Panc1 (cell line): ENCODE measurements at regions of chr5 and their contacts with region 1.

Region 1: DNA sequence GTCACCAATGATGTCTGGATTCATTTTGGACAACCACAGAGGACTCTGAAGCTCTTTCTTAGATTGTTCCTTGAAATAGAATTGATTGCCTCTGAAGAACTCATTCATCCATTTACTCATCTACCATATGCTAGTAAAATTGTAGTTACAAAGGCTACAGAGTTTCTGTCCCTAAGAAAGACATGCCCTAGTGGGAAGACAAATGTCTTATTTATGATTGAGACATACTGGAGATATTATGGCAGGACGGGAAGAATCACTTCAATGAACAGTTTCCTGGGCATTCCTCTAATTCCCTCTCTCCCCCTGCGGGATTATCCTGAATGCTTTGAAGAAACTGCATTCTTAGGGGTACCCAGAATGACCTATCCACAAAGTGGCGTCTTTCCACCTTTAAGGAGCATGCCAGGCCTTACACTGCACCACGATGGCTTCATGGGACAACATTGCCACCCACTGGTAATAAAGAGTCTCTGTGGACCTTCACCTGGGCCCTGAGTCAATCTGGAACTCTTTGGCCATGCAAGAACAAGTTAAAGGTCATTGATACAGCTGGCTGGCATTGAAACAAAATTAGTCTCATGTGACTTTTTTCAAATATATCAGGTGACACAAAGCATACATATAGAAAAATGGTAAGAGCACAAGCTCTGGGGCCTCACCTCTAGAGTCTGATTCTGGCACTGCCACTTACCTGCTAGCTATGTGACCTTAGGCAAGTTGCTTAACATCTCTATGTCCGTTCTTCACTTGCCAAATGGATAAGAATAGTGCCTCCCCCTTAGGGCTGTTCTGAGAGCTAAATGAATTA is 32.1 kb downstream of the ANKRD55 start:
- DNase-seq: peak; percentile 79
- ATAC-seq: peak; percentile 100
- H3K4me3 ChIP-seq: no peak overlapping the region
- H3K27ac ChIP-seq: no peak overlapping the region
- H3K4me1 ChIP-seq: no peaks in the 10 kb centered on the region
- H3K27me3 ChIP-seq: no peaks in the 10 kb centered on the region
- CTCF ChIP-seq: peak; percentile 87

Region 2: GRCh38 chr5:55699041-55699688 is 501.9 kb before region 1 on chr5:
- CTCF ChIA-PET with region 1: interaction called, 12 read pairs
- POLR2A ChIA-PET with region 1: no interaction called
- in situ Hi-C with region 1: no loop called
- intact Hi-C with region 1: no loop called
- DNase-seq: no peak
- ATAC-seq: no peak
- H3K4me3 ChIP-seq: no peak overlapping the region
- H3K27ac ChIP-seq: no peak overlapping the region
- H3K4me1 ChIP-seq: no peaks in the 10 kb centered on the region
- H3K27me3 ChIP-seq: no peaks in the 10 kb centered on the region
- CTCF ChIP-seq: no peak

Region 3: DNA sequence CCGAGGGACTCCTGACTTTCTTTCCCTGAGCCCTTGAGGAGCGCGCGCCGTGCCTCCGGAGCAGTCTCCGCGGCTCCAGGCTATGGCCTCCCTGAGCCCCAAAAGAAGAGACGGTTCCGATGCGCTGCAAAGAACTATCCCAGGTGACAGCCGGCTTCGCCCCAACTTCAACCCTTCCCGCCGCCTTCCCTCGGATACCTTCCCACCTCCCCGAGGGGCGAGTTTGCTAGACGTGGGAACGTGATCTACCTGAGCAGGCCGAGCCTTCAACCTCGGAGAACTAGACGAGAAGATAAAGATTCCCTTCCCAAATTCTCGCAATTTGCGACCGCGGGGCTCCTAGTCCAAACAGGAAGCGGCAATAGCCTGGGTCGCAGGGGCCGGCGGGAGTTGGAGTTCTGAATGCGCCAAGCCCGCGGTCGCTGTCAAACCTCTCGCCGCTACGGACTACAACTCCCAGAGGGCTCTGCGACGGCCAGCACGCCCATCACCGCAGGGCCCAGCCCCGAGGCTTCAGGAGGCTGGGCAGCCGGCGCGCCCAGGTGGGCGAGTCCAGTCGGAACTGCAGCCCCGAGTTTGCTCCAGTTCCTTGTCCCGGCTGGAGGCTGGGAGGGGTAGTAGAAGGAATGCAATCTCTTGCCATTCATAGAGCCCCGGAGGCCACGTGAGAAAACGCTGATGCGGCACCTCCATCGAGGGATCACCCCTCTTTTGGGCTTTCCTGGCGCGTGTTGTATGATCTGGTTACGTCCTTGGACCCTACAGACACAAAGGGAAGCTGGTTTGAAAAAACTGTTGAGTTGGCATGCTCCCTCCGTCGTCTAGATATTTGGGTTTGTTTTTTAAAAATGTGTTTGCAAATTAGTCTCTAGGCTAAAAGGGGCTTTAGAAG is 488.8 kb before region 1 on chr5 and contains the start of gene SLC38A9:
- CTCF ChIA-PET with region 1: no interaction called
- POLR2A ChIA-PET with region 1: no interaction called
- in situ Hi-C with region 1: no loop called
- intact Hi-C with region 1: loop called (anchors 10 kb)
- DNase-seq: peak; percentile 73
- ATAC-seq: peak; percentile 100
- H3K4me3 ChIP-seq: peak within 1 kb of the TSS; percentile 94 to 95
- H3K27ac ChIP-seq: peak within 1 kb of the TSS; percentile 80
- H3K4me1 ChIP-seq: no peaks in the 10 kb centered on the region
- H3K27me3 ChIP-seq: no peaks in the 10 kb centered on the region
- CTCF ChIP-seq: no peak
- total RNA-seq, gene SLC38A9: 12.8 TPM

Region 4: DNA sequence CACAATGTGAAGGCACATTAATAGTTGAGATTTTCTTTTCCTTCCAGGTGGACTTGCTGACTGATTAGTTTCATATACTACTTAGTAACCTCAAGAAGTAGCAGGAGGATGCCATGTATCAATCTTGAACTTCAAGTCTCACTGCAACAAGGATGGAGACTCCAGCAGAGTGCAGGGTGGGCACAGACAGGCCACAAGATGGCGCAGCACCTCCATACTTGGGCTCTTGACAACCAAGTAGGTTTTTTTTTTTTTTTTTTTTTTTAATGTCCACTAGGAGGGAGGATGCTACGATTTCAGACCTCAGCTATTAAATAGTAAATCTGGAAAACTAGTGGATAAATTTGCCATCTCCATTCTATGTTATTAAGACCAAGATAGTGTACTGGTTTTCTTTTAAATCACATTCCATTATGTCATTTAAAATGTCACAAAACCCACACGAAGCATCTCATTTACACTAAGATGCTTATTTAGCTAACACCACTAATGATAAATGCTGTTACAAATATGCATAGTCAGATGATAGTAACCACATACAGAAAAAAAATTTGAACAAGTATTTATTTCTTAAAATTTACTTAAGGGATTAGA is 264.9 kb before region 1 on chr5:
- CTCF ChIA-PET with region 1: interaction called, 8 read pairs
- POLR2A ChIA-PET with region 1: no interaction called
- in situ Hi-C with region 1: no loop called
- intact Hi-C with region 1: loop called (anchors 1 kb)
- DNase-seq: peak; percentile 76
- ATAC-seq: peak; percentile 91
- H3K4me3 ChIP-seq: no peak overlapping the region
- H3K27ac ChIP-seq: no peak overlapping the region
- H3K4me1 ChIP-seq: no peaks in the 10 kb centered on the region
- H3K27me3 ChIP-seq: no peaks in the 10 kb centered on the region
- CTCF ChIP-seq: peak; percentile 94

Region 5: DNA sequence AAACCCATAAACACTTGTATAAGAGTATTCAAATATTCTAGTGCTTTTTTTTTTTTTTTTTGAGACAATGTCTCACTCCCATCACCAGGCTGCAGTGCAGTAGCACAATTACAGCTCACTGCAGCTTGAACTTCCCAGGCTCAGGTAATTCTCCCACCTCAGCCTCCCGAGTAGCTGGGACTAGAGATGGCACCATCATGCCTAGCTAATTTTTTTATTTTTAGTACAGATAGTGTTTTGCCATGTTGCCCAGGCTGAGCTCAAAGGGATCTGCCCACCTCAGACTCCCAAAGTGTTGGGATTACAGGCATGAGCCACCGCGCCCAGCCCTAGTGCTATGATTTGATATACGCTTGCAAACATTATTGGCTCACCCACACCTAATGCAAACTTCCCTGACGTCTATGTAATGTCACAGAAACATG is 218.1 kb before region 1 on chr5:
- CTCF ChIA-PET with region 1: interaction called, 17 read pairs
- POLR2A ChIA-PET with region 1: no interaction called
- in situ Hi-C with region 1: no loop called
- intact Hi-C with region 1: no loop called
- DNase-seq: no peak
- ATAC-seq: peak; percentile 68; the same call in 1 of the 2 replicates
- H3K4me3 ChIP-seq: no peak overlapping the region
- H3K27ac ChIP-seq: no peak overlapping the region
- H3K4me1 ChIP-seq: peaks cover 2% of the 10 kb centered on the region
- H3K27me3 ChIP-seq: no peaks in the 10 kb centered on the region
- CTCF ChIP-seq: peak; percentile 42

Region 6: DNA sequence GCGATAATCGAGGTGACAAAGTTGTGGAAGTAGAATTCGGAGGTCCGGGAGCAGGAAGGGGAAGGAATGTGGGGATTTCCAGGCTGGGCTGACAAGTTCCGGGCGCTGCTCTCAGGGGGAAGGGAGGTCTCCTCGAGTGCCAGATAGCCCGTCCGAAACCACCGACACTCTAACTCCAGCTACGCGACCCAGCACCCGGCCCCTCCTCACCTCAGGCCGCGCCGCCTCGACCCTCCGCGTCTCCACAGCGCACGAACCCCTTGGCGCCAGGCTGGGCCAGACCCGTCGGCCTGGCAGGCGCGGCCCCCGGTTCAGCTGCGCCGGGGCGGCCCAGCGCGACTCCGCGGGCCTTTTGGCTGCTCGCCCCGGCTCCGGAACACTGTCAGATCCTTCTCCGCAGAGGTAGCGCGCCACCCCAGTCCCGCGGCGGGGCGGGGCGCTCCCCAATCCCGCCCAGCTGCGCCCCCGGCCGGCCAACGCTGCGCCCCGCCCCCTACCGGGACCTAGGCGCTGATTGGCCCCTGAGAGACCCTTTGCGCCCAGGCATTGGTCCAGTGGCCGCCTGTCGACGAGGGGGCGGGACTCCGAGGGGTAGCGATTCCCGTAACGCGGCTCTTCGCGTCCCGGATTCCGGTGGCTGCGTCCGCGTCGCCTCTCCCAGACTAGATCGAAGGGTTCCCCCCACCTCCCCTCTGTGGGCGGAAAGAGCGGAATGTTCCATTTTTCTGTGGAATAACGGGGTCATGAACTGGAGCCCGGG is 206.3 kb before region 1 on chr5 and contains the start of gene IL6ST:
- CTCF ChIA-PET with region 1: no interaction called
- POLR2A ChIA-PET with region 1: no interaction called
- in situ Hi-C with region 1: no loop called
- intact Hi-C with region 1: loop called (anchors 10 kb)
- DNase-seq: peak; percentile 76
- ATAC-seq: peak; percentile 97
- H3K4me3 ChIP-seq: peak within 1 kb of the TSS; percentile 92 to 96
- H3K27ac ChIP-seq: peak within 1 kb of the TSS; percentile 98
- H3K4me1 ChIP-seq: peaks cover 35% of the 10 kb centered on the region
- H3K27me3 ChIP-seq: no peaks in the 10 kb centered on the region
- CTCF ChIP-seq: 0 out of 2 replicates have a peak, but pooled peaks have one; percentile 21
- total RNA-seq, gene IL6ST: 181 TPM

Region 7: DNA sequence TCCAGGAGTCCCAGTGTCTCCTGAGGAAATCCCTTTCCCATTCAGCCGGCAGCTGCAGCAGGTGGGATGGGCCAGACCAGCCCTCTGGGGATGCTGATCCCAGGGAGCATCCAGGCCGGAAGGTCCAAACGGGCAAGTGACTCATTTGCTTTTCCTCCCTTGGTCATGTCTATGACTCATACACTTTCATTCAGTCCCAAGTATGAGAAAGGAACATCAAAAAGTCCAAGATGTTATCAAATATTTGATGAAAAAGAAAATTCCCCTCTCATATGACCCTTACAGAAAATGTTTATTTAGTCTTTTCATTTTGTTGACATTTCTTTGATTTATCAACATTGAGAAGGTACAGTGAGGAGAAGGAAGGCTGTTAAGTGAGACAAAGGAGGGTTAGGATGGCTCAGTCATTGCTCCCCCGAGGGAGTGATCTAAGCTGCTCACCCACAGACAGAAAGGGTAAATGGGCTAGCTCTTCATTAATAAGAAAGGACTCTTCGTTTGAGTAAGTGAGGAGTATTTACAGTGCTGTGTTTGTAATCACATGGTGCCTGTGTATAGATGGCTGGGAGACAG is 149.6 kb after region 1 on chr5:
- CTCF ChIA-PET with region 1: no interaction called
- POLR2A ChIA-PET with region 1: interaction called, 12 read pairs
- in situ Hi-C with region 1: no loop called
- intact Hi-C with region 1: no loop called
- DNase-seq: peak; percentile 74
- ATAC-seq: peak; percentile 95
- H3K4me3 ChIP-seq: no peak overlapping the region
- H3K27ac ChIP-seq: peak overlapping the region; percentile 69
- H3K4me1 ChIP-seq: peaks cover 19% of the 10 kb centered on the region
- H3K27me3 ChIP-seq: no peaks in the 10 kb centered on the region
- CTCF ChIP-seq: no peak